ENCODE measurements at regions of chr12 and their contacts with region 1.

Region 1: GRCh38 chr12:79174626-79175025 is 310.1 kb downstream of the SYT1 start:
- DNase-seq: peak; percentile 77
- ATAC-seq: peak; percentile 75; the same call in 1 of the 2 replicates
- H3K4me3 ChIP-seq: no peak overlapping the region
- H3K27ac ChIP-seq: no peak overlapping the region
- H3K4me1 ChIP-seq: no peaks in the 10 kb centered on the region
- H3K27me3 ChIP-seq: no peaks in the 10 kb centered on the region
- CTCF ChIP-seq: peak; percentile 61
- POLR2A ChIP-seq: no peak
- RAD21 ChIP-seq: peak; percentile 68

Region 2: DNA sequence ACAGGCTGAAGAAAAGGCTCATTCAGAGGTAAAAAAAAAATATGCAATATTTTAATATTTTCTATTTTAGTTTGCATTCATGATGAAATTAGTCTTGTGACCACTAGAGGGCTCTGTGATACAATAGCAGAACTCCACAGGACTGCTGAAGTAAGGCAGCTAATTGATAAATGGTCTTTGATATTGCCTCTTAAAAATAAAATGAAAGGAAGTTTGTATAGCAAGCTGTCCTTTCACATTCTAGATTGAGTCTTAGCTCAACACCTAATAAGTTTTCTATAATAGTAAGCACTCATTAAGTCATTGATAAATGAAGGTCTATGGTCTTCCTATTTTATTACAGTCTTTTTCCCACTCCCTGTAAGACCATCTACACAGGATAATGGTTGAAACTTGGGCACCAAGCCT is 1028.3 kb before region 1 on chr12:
- CTCF ChIA-PET with region 1: no interaction called
- POLR2A ChIA-PET with region 1: no interaction called
- dilution Hi-C with region 1: no loop called
- in situ Hi-C with region 1: no loop called
- intact Hi-C with region 1: loop called (anchors 2 kb)
- DNase-seq: peak; percentile 62
- ATAC-seq: peak; percentile 70; the same call in 1 of the 2 replicates
- H3K4me3 ChIP-seq: no peak overlapping the region
- H3K27ac ChIP-seq: no peak overlapping the region
- H3K4me1 ChIP-seq: no peaks in the 10 kb centered on the region
- H3K27me3 ChIP-seq: no peaks in the 10 kb centered on the region
- CTCF ChIP-seq: peak; percentile 67
- POLR2A ChIP-seq: no peak
- RAD21 ChIP-seq: peak; percentile 58

Region 3: DNA sequence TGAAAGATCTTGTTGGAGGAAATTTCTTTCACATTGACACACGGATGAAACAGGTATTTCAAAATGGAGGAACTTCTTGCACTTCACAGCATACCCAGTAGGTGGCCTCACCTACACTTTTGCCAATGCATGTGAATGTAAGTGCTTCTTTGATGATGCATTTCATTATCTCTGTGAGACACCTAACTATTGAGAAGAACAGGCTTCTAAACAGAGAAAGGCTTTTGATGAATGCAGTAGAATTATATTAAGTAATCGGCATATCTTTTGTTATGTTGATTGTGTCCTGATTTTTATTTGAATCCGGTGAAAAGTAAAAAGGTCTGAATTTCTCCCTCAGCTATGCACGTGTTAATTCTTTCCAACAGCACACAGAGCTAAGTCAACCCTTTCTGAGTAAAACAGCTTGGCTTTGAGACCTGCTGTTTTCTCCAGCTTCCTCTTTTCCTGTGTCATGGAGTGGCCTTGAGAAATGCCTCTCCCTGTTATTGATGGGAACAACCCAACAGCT is 945.0 kb before region 1 on chr12:
- CTCF ChIA-PET with region 1: no interaction called
- POLR2A ChIA-PET with region 1: no interaction called
- dilution Hi-C with region 1: no loop called
- in situ Hi-C with region 1: no loop called
- intact Hi-C with region 1: loop called (anchors 5 kb)
- DNase-seq: peak; percentile 52
- ATAC-seq: peak; percentile 66
- H3K4me3 ChIP-seq: no peak overlapping the region
- H3K27ac ChIP-seq: no peak overlapping the region
- H3K4me1 ChIP-seq: no peaks in the 10 kb centered on the region
- H3K27me3 ChIP-seq: no peaks in the 10 kb centered on the region
- CTCF ChIP-seq: peak; percentile 59
- POLR2A ChIP-seq: no peak
- RAD21 ChIP-seq: peak; percentile 59

Region 4: DNA sequence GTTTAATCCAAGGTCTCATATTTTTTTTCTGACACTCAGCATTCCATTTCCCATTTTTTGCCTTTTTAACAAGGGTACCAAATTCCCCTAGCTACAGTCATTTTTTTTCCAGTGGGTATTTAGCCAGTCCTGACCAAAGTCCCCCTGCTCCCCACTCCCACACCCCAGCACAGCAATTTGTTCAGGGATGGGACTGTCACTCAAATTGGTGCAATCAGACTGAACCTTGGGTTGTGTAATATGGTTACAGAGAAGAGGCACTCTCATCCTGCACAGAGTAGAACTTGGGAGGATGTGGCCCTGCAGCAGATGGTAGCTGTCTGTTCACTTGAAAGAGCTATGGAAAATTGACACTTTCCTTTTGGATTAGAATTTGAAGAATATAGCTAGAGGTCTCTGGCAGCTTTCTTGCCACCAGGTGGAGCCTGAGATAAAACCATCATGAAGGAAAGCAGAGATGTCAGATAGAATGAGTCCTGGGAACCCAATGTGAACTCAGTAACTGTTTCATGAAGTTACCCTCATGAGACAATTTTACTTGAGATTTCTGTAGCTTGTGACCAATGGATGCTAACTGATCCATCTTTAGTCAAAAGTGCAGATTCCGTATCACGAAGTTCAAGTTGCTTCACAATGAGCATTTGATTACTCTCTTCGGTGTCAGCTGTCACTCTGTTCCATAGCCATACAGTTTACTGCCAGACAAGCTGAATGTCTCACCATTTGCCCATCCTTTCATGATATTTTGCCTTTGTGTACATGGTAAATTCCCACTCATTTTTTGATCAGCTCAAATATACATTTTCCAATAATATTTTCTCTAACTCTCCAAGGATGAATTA is 704.1 kb before region 1 on chr12:
- CTCF ChIA-PET with region 1: interaction called, 9 read pairs
- POLR2A ChIA-PET with region 1: no interaction called
- dilution Hi-C with region 1: no loop called
- in situ Hi-C with region 1: no loop called
- intact Hi-C with region 1: loop called (anchors 2 kb)
- DNase-seq: peak; percentile 60
- ATAC-seq: peak; percentile 74
- H3K4me3 ChIP-seq: no peak overlapping the region
- H3K27ac ChIP-seq: no peak overlapping the region
- H3K4me1 ChIP-seq: no peaks in the 10 kb centered on the region
- H3K27me3 ChIP-seq: no peaks in the 10 kb centered on the region
- CTCF ChIP-seq: peak; percentile 70
- POLR2A ChIP-seq: no peak
- RAD21 ChIP-seq: peak; percentile 70

Region 5: DNA sequence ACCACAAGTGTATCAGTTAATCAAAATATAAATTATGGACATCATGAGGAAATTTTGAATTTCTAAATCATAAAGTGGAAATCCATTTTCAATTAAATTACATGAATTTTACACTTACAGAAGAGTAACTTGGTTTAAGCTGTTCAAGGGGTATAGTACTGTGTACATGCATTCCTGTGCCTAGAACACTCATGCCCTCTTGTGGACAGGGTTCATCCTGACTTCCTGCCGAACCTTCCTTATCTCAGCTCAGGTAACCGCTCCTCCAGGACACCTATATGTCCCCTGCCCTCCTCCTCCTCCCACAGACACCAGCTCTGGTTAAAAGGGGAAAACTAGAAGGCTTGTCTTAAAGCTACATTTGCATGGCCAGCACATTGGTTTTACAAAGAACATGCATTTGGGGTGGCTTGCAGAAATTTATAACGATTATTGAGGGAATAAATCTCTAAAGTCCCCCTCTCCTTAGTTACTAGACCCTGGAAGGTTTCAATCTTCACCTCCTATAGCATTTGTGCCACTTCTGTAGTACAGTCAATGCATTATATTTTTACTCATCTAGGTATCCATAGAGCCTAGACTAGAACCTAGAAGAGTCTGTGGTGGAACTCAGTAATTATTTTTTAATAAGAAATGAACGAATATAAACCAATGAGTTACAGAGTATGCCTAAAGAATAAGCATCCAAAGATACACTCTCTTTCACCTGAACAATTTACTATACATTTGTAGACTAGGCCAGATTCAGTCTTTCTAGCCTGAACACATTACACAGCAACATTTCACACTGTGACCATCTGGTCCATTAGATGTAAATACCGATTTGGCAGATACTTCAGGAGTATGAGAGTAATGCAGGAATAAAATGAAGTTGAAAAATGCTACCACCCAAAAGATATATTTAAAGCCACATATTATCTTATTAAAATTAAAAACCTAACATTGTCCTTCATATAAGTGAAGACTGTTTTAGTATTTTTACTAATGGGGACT is 170.5 kb after region 1 on chr12:
- CTCF ChIA-PET with region 1: no interaction called
- POLR2A ChIA-PET with region 1: no interaction called
- dilution Hi-C with region 1: no loop called
- in situ Hi-C with region 1: no loop called
- intact Hi-C with region 1: loop called (anchors 10 kb)
- DNase-seq: peak; percentile 50
- ATAC-seq: peak; percentile 86
- H3K4me3 ChIP-seq: no peak overlapping the region
- H3K27ac ChIP-seq: no peak overlapping the region
- H3K4me1 ChIP-seq: no peaks in the 10 kb centered on the region
- H3K27me3 ChIP-seq: no peaks in the 10 kb centered on the region; the same call in 1 of the 2 replicates
- CTCF ChIP-seq: peak; percentile 57
- POLR2A ChIP-seq: no peak
- RAD21 ChIP-seq: peak; percentile 78

Measured in IMR-90 (cell line).